Esophagus squamous epithelium (tissue), 5 donors: ENCODE measurements at regions of chr2 and their contacts with region 1.

Region 1: GRCh38 chr2:100730346-100730745 is 89.6 kb upstream of the NPAS2 start:
- DNase-seq: no peak
- H3K4me3 ChIP-seq: no peak overlapping the region
- H3K27ac ChIP-seq: no peak overlapping the region
- H3K4me1 ChIP-seq: peaks cover 0 to 16% (median 3%) of the 10 kb centered on the region in 3 donors
- H3K27me3 ChIP-seq: no peaks in the 10 kb centered on the region
- CTCF ChIP-seq: peak in 5 of 6 experiments; percentile 53 to 81 (median 61)
- POLR2A ChIP-seq: no peak

Region 2: DNA sequence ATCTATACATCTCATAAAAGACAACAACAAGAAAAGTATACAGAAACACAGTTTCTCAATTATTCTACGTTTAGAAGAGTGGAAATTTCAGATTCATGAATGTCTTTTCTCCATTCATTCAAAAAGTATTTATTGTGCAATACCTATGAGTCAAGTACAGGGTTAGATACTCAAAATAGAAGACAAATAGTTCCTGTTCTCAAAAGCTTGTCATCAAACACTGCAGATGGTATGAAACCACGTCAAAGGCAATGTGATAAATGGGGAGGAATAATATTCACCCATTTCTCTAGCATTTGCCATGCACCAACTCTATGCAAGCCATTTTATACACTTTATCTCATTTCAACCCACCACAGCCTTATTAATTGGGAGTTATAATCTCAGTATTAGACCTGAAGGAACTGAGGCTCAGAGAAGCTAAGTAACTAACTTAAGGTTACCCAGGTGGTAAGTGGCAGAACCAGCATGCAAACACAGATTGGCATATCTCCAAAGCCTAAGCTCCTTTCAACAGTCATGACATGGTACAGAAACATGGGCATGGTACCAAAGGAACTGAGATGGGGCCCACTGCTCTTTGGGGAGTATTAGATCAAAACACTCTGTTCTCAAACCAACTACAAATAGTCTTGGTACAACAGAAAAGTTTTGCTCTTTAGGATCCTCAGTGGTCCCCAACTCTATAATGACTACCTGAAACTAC is 22.4 kb after region 1 on chr2:
- intact Hi-C with region 1: no loop called
- DNase-seq: no peak
- H3K4me3 ChIP-seq: no peak overlapping the region
- H3K27ac ChIP-seq: peak overlapping the region; percentile 7 to 60 (median 35)
- H3K4me1 ChIP-seq: peaks cover 0 to 29% (median 17%) of the 10 kb centered on the region in 3 donors
- H3K27me3 ChIP-seq: peaks cover 0 to 6% (median 0%) of the 10 kb centered on the region in 4 donors
- CTCF ChIP-seq: no peak
- POLR2A ChIP-seq: no peak

Region 3: DNA sequence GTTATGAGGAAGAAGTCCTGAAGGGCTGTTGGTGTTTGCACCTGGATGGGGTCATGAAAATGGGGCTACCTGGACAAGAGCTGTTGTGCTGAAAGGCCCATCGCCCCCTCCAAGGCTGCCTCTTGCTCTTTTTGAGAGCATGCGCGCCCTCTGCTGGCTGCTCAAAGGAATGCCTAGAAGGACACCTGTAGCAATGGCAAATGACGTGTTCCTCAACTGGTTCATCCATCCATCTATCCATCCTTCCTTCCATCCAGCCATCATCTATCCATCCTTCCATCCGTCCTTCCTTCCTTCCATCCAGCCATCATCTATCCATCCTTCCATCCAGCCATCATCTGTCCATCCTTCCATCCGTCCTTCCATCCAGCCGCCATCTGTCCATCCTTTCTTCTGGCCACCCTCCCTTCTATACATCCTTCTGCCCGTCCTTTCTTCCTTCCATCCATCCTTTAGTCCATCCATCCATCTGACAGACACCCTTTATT is 254.6 kb after region 1 on chr2:
- intact Hi-C with region 1: loop called (anchors 5 kb)
- DNase-seq: peak; percentile 8
- H3K4me3 ChIP-seq: no peak overlapping the region
- H3K27ac ChIP-seq: no peak overlapping the region
- H3K4me1 ChIP-seq: no peaks in the 10 kb centered on the region
- H3K27me3 ChIP-seq: no peaks in the 10 kb centered on the region
- CTCF ChIP-seq: peak; percentile 84 to 91 (median 88)
- POLR2A ChIP-seq: no peak